Heart left ventricle (tissue), 16 donors: ENCODE measurements at regions of chr14 and their contacts with region 1.

Region 1: GRCh38 chr14:64218344-64219240 is 75.6 kb downstream of the ESR2 start:
- DNase-seq: peak in 4 of 5 donors; percentile 42 to 80 (median 69)
- ATAC-seq: peak; percentile 64 to 79 (median 69)
- H3K4me3 ChIP-seq: no peak overlapping the region
- H3K27ac ChIP-seq: peak overlapping the region; percentile 43 to 89 (median 74)
- H3K4me1 ChIP-seq: peaks cover 0 to 80% (median 21%) of the 10 kb centered on the region in 12 donors
- H3K27me3 ChIP-seq: no peaks in the 10 kb centered on the region
- CTCF ChIP-seq: no peak
- POLR2A ChIP-seq: no peak

Region 2: GRCh38 chr14:64196814-64197411 is 21.7 kb before region 1 on chr14:
- intact Hi-C with region 1: loop called in 2 of 10 experiments (anchors 2 kb)
- DNase-seq: peak; percentile 56 to 80 (median 72)
- ATAC-seq: peak; percentile 84 to 89 (median 86)
- H3K4me3 ChIP-seq: peak overlapping the region; percentile 4 to 65 (median 48)
- H3K27ac ChIP-seq: peak overlapping the region; percentile 34 to 89 (median 82)
- H3K4me1 ChIP-seq: peaks cover 0 to 70% (median 36%) of the 10 kb centered on the region in 12 donors
- H3K27me3 ChIP-seq: no peaks in the 10 kb centered on the region
- CTCF ChIP-seq: no peak
- POLR2A ChIP-seq: no peak